ENCODE measurements at regions of chr1 and their contacts with region 1.

Region 1: GRCh38 chr1:210400043-210400840 is 71.5 kb downstream of the HHAT start:
- DNase-seq: peak; percentile 48
- H3K4me3 ChIP-seq: no peak overlapping the region
- H3K27ac ChIP-seq: no peak overlapping the region
- H3K4me1 ChIP-seq: no peaks in the 10 kb centered on the region
- H3K27me3 ChIP-seq: peaks cover 1 to 4% of the 10 kb centered on the region in 2 experiments
- CTCF ChIP-seq: peak; percentile 81 to 89
- POLR2A ChIP-seq: no peak

Region 2: GRCh38 chr1:210143465-210144062 is 256.7 kb before region 1 on chr1:
- CTCF ChIA-PET with region 1: interaction called, 32 read pairs
- POLR2A ChIA-PET with region 1: no interaction called
- dilution Hi-C with region 1: no loop called
- intact Hi-C with region 1: loop called (anchors 1 kb)
- DNase-seq: peak; percentile 83
- H3K4me3 ChIP-seq: no peak overlapping the region
- H3K27ac ChIP-seq: no peak overlapping the region
- H3K4me1 ChIP-seq: no peaks in the 10 kb centered on the region
- H3K27me3 ChIP-seq: peaks cover 2 to 8% of the 10 kb centered on the region in 2 experiments
- CTCF ChIP-seq: peak; percentile 37 to 43
- POLR2A ChIP-seq: no peak

Region 3: GRCh38 chr1:210200124-210200736 is 200.0 kb before region 1 on chr1:
- CTCF ChIA-PET with region 1: interaction called, 11 read pairs
- POLR2A ChIA-PET with region 1: no interaction called
- dilution Hi-C with region 1: no loop called
- intact Hi-C with region 1: no loop called
- DNase-seq: no peak
- H3K4me3 ChIP-seq: no peak overlapping the region
- H3K27ac ChIP-seq: no peak overlapping the region
- H3K4me1 ChIP-seq: no peaks in the 10 kb centered on the region
- H3K27me3 ChIP-seq: no peaks in the 10 kb centered on the region
- CTCF ChIP-seq: no peak
- POLR2A ChIP-seq: no peak

Region 4: DNA sequence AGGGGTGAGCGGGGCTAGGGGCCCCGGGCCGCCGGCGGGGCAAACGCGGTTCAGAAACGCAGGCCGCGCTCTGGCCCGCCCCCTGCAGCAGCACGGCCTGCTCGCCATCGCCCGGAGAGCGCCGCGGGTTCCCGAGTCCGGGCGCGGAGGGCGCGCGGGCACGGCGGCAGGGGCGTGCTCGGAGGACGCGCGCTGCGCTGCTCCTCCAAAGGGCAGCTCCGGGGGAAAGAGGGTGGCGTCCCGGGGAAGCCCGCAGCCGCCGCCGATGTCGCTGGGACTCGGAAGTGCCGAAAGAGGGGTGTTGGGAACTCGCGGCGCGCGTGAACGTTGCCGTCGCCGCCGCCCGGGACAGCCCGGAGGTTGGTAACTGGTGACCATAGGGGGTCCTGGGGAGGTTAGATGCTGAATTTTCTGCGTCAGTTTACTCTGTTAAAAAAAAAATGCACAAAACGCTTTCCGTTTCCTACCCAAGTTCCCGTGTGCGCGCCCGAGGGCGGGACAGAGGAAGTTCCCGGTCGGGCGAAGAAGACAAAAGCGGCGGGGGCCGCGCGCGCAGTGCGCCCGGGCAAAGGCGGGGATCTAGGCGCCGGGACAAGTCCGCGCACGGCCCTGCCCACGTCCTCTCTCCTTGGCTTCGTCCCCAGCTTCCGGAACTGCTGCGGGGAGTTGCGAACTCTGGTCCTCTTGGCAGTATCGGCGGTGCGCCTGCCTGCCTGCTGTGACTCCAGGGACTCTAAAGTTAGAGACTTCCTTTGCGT is 71.3 kb before region 1 on chr1 and contains the start of gene HHAT:
- CTCF ChIA-PET with region 1: no interaction called
- POLR2A ChIA-PET with region 1: no interaction called
- dilution Hi-C with region 1: no loop called
- intact Hi-C with region 1: loop called (anchors 2 kb)
- DNase-seq: peak; percentile 59
- H3K4me3 ChIP-seq: peak within 1 kb of the TSS; percentile 46 to 82 (median 55)
- H3K27ac ChIP-seq: peak within 1 kb of the TSS; percentile 75
- H3K4me1 ChIP-seq: peaks cover 6% of the 10 kb centered on the region
- H3K27me3 ChIP-seq: peaks cover 0 to 2% of the 10 kb centered on the region in 2 experiments
- CTCF ChIP-seq: no peak
- POLR2A ChIP-seq: no peak
- total RNA-seq, gene HHAT: 2.4 TPM in 2 replicates

Region 5: GRCh38 chr1:210360852-210361477 is 39.3 kb before region 1 on chr1:
- CTCF ChIA-PET with region 1: interaction called, 32 read pairs
- POLR2A ChIA-PET with region 1: no interaction called
- dilution Hi-C with region 1: no loop called
- intact Hi-C with region 1: loop called (anchors 1 kb)
- DNase-seq: peak; percentile 49
- H3K4me3 ChIP-seq: no peak overlapping the region
- H3K27ac ChIP-seq: no peak overlapping the region
- H3K4me1 ChIP-seq: no peaks in the 10 kb centered on the region
- H3K27me3 ChIP-seq: no peaks in the 10 kb centered on the region
- CTCF ChIP-seq: peak; percentile 27 to 63
- POLR2A ChIP-seq: no peak

Region 6: GRCh38 chr1:210384630-210385029 is 15.6 kb before region 1 on chr1:
- CTCF ChIA-PET with region 1: interaction called, 11 read pairs
- POLR2A ChIA-PET with region 1: interaction called, 3 read pairs
- dilution Hi-C with region 1: no loop called
- intact Hi-C with region 1: no loop called
- DNase-seq: no peak
- H3K4me3 ChIP-seq: no peak overlapping the region
- H3K27ac ChIP-seq: no peak overlapping the region
- H3K4me1 ChIP-seq: no peaks in the 10 kb centered on the region
- H3K27me3 ChIP-seq: no peaks in the 10 kb centered on the region
- CTCF ChIP-seq: no peak
- POLR2A ChIP-seq: no peak

Region 7: GRCh38 chr1:210434223-210434622 is 34.0 kb after region 1 on chr1:
- CTCF ChIA-PET with region 1: no interaction called
- POLR2A ChIA-PET with region 1: no interaction called
- dilution Hi-C with region 1: no loop called
- intact Hi-C with region 1: no loop called
- DNase-seq: no peak
- H3K4me3 ChIP-seq: no peak overlapping the region
- H3K27ac ChIP-seq: no peak overlapping the region
- H3K4me1 ChIP-seq: peaks cover 8% of the 10 kb centered on the region
- H3K27me3 ChIP-seq: no peaks in the 10 kb centered on the region
- CTCF ChIP-seq: no peak
- POLR2A ChIP-seq: no peak